RWPE1 (cell line): ENCODE measurements at regions of chr18 and their contacts with region 1.

Region 1: GRCh38 chr18:10560450-10561045 is 34.7 kb downstream of the NAPG start:
- DNase-seq: peak; percentile 69
- H3K27ac ChIP-seq: peak overlapping the region; percentile 46
- CTCF ChIP-seq: peak; percentile 80

Region 2: GRCh38 chr18:11154368-11154989 is 593.9 kb after region 1 on chr18:
- CTCF ChIA-PET with region 1: interaction called, 16 read pairs
- POLR2A ChIA-PET with region 1: no interaction called
- DNase-seq: peak; percentile 40
- H3K27ac ChIP-seq: no peak overlapping the region
- CTCF ChIP-seq: peak; percentile 25; the same call in 1 of the 2 replicates